K562 (cell line): ENCODE measurements at regions of chr10 and their contacts with region 1.

Region 1: DNA sequence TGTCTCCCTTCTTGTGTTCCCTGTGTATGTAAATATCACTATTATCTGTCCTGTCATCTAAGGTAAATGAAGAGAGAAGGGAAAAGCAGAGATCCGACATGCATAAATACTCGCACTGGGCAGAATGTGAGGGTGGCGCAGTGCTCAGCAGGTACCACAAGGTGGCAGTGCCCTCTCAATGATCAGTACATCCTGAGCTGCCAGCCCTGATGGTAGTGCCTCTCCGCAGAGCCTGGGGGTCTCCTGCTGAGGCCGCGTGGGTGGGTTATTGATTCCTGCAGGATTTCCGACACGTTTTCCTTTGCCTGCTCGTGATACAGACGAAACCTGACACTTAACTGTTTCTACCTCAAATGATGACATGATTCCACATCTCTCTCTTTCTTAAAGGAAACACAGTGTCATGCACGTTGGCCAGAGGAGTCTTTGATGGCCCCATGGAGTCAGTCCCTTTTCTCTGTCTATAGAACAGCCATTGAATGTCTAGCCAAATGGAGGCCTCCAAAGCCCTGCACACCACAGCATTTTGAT is 19.8 kb downstream of the RGR start:
- DNase-seq: peak; percentile 75 to 83 (median 79)
- ATAC-seq: peak; percentile 97
- H3K4me3 ChIP-seq: no peak overlapping the region
- H3K27ac ChIP-seq: no peak overlapping the region
- H3K4me1 ChIP-seq: no peaks in the 10 kb centered on the region
- H3K27me3 ChIP-seq: peaks cover 3 to 44% of the 10 kb centered on the region in 2 experiments; a peak in 2 of 5 replicates
- CTCF ChIP-seq: peak; percentile 90 to 98 (median 97)
- EP300 ChIP-seq: no peak
- POLR2A ChIP-seq: no peak
- RAD21 ChIP-seq: peak; percentile 96 to 97

Region 2: DNA sequence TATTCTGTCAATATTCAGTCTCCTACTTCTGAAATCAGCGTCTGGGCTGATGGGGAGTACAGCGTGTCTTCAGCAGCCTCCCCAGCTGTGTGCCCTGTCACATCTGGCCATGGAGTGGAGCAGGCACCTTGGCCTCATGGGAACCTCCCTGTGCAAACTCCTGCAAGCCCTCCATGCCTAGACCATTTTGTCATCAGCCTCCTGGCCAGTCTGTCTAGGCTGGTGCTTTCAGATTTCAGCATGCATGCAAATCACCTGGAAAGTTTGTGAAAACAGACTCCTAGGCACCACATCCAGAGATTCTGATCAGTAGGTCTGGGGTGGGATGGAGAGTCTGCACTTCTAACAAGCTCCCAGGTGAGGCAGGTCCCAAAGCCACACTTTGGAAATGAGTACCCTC is 37.5 kb after region 1 on chr10:
- CTCF ChIA-PET with region 1: no interaction called
- POLR2A ChIA-PET with region 1: interaction called, 3 read pairs
- in situ Hi-C with region 1: no loop called
- intact Hi-C with region 1: loop called (anchors 5 kb)
- DNase-seq: no peak
- ATAC-seq: peak; percentile 63
- H3K4me3 ChIP-seq: no peak overlapping the region
- H3K27ac ChIP-seq: no peak overlapping the region
- H3K4me1 ChIP-seq: peaks cover 3 to 10% of the 10 kb centered on the region in 2 experiments
- H3K27me3 ChIP-seq: peaks cover 8 to 20% of the 10 kb centered on the region in 2 experiments
- CTCF ChIP-seq: no peak
- EP300 ChIP-seq: no peak
- POLR2A ChIP-seq: no peak
- RAD21 ChIP-seq: no peak

Region 3: GRCh38 chr10:84328418-84329195 is 63.9 kb after region 1 on chr10 and contains the start of gene CCSER2:
- CTCF ChIA-PET with region 1: no interaction called
- POLR2A ChIA-PET with region 1: no interaction called
- in situ Hi-C with region 1: loop called (anchors 5 kb)
- intact Hi-C with region 1: loop called (anchors 5 kb)
- DNase-seq: peak; percentile 72 to 100 (median 100)
- ATAC-seq: peak; percentile 85
- H3K4me3 ChIP-seq: peak within 1 kb of the TSS; percentile 89
- H3K27ac ChIP-seq: peak within 1 kb of the TSS; percentile 88
- H3K4me1 ChIP-seq: peaks cover 17 to 33% of the 10 kb centered on the region in 2 experiments
- H3K27me3 ChIP-seq: no peaks in the 10 kb centered on the region
- CTCF ChIP-seq: peak in 2 of 3 experiments; percentile 26 to 42; a peak in 3 of 6 replicates
- EP300 ChIP-seq: no peak
- POLR2A ChIP-seq: no peak
- RAD21 ChIP-seq: no peak
- polyA plus RNA-seq, gene CCSER2: 2.7 to 2.9 TPM

Region 4: GRCh38 chr10:84352251-84352842 is 87.7 kb after region 1 on chr10:
- CTCF ChIA-PET with region 1: no interaction called
- POLR2A ChIA-PET with region 1: no interaction called
- in situ Hi-C with region 1: no loop called
- intact Hi-C with region 1: loop called (anchors 2 kb)
- DNase-seq: peak; percentile 67 to 86 (median 74)
- ATAC-seq: peak; percentile 99
- H3K4me3 ChIP-seq: no peak overlapping the region
- H3K27ac ChIP-seq: no peak overlapping the region
- H3K4me1 ChIP-seq: no peaks in the 10 kb centered on the region; a peak in 1 of 5 replicates
- H3K27me3 ChIP-seq: no peaks in the 10 kb centered on the region
- CTCF ChIP-seq: peak; percentile 86 to 90 (median 87)
- EP300 ChIP-seq: no peak
- POLR2A ChIP-seq: no peak
- RAD21 ChIP-seq: peak; percentile 52 to 75

Region 5: GRCh38 chr10:84375011-84375410 is 110.3 kb after region 1 on chr10:
- CTCF ChIA-PET with region 1: interaction called, 13 read pairs
- POLR2A ChIA-PET with region 1: interaction called, 3 read pairs
- in situ Hi-C with region 1: no loop called
- intact Hi-C with region 1: loop called (anchors 1 kb)
- DNase-seq: peak; percentile 30 to 78 (median 37)
- ATAC-seq: peak; percentile 85
- H3K4me3 ChIP-seq: no peak overlapping the region
- H3K27ac ChIP-seq: no peak overlapping the region
- H3K4me1 ChIP-seq: no peaks in the 10 kb centered on the region
- H3K27me3 ChIP-seq: no peaks in the 10 kb centered on the region
- CTCF ChIP-seq: peak; percentile 59 to 91 (median 70)
- EP300 ChIP-seq: no peak
- POLR2A ChIP-seq: no peak
- RAD21 ChIP-seq: peak; percentile 96

Region 6: GRCh38 chr10:84429926-84430520 is 165.3 kb after region 1 on chr10:
- CTCF ChIA-PET with region 1: no interaction called
- POLR2A ChIA-PET with region 1: no interaction called
- in situ Hi-C with region 1: no loop called
- intact Hi-C with region 1: loop called (anchors 1 kb)
- DNase-seq: peak; percentile 61 to 81 (median 65)
- ATAC-seq: peak; percentile 98
- H3K4me3 ChIP-seq: no peak overlapping the region
- H3K27ac ChIP-seq: no peak overlapping the region
- H3K4me1 ChIP-seq: no peaks in the 10 kb centered on the region; a peak in 1 of 5 replicates
- H3K27me3 ChIP-seq: no peaks in the 10 kb centered on the region
- CTCF ChIP-seq: peak; percentile 81 to 89 (median 88)
- EP300 ChIP-seq: no peak
- POLR2A ChIP-seq: no peak
- RAD21 ChIP-seq: peak; percentile 72 to 87